ENCODE measurements at regions of chr3 and their contacts with region 1.

Region 1: GRCh38 chr3:48465531-48466378 is 19.2 kb downstream of the ATRIP start:
- DNase-seq: peak; percentile 90
- H3K4me3 ChIP-seq: peak overlapping the region; percentile 72
- H3K27ac ChIP-seq: peak overlapping the region; percentile 59
- H3K4me1 ChIP-seq: peaks cover 51% of the 10 kb centered on the region
- CTCF ChIP-seq: peak; percentile 75

Region 2: GRCh38 chr3:48446425-48447193 is 19.1 kb before region 1 on chr3 and contains the start of gene ATRIP:
- CTCF ChIA-PET with region 1: no interaction called
- POLR2A ChIA-PET with region 1: interaction called, 3 read pairs
- intact Hi-C with region 1: loop called (anchors 2 kb)
- DNase-seq: peak; percentile 91
- H3K4me3 ChIP-seq: peak within 1 kb of the TSS; percentile 92
- H3K27ac ChIP-seq: peak within 1 kb of the TSS; percentile 43
- H3K4me1 ChIP-seq: peaks cover 30% of the 10 kb centered on the region
- CTCF ChIP-seq: no peak
- total RNA-seq, gene ATRIP: 16.3 and 16.8 TPM in 2 replicates

Region 3: DNA sequence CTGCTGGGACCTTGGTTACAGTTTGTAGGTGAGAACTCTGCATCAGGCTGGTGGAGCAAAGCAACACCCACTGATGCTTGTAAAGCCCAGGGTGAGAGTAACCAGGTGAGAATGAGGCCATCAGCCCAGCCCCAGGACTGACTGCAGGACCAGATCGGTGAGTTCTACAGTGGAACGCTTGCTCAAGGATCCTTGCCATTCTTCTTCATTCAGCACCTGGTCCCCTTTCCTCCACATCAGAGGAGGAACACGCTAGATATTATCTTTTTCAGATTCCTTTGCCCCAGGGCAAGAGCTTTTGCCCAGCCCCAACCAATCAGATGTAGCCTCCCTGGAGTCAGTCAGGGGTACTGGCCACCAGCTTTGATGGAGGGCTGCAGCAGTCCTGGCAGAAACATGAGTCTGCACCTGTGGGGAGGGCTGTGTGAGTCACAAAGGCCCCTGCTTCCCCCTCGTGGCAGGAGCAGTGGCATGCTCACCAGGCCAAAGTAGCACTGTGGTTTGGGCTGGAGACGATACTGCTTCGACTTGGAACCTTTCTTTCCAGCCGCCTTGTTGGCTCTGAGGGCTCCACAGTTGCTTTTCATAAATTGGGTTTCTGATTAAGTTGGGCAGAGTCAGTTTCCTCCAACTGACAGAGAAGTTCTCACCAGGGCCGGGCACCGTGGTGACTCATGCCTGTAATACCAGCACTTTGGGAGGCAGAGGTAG is 41.8 kb after region 1 on chr3:
- CTCF ChIA-PET with region 1: interaction called, 3 read pairs
- POLR2A ChIA-PET with region 1: no interaction called
- intact Hi-C with region 1: loop called (anchors 1 kb)
- DNase-seq: peak; percentile 78
- H3K4me3 ChIP-seq: no peak overlapping the region
- H3K27ac ChIP-seq: no peak overlapping the region
- H3K4me1 ChIP-seq: no peaks in the 10 kb centered on the region
- CTCF ChIP-seq: peak; percentile 87

Region 4: GRCh38 chr3:48548729-48549705 is 83.3 kb after region 1 on chr3:
- CTCF ChIA-PET with region 1: interaction called, 4 read pairs
- POLR2A ChIA-PET with region 1: no interaction called
- intact Hi-C with region 1: loop called (anchors 1 kb)
- DNase-seq: peak; percentile 86
- H3K4me3 ChIP-seq: no peak overlapping the region
- H3K27ac ChIP-seq: no peak overlapping the region
- H3K4me1 ChIP-seq: no peaks in the 10 kb centered on the region
- CTCF ChIP-seq: peak; percentile 98